Activated naive CD4-positive, alpha-beta T cell treated with anti-CD3 and anti-CD28 coated beads for 36 hours (primary cell): ENCODE measurements at regions of chr9 and their contacts with region 1.

Region 1: GRCh38 chr9:79129865-79130480 is 441.8 kb upstream of the TLE4 start:
- DNase-seq: peak; percentile 58
- H3K4me3 Mint-ChIP-seq: no peak overlapping the region
- H3K27ac Mint-ChIP-seq: no peak overlapping the region
- H3K4me1 Mint-ChIP-seq: no peaks in the 10 kb centered on the region
- H3K27me3 Mint-ChIP-seq: peaks cover 2% of the 10 kb centered on the region

Region 2: GRCh38 chr9:79565245-79565644 is 435.3 kb after region 1 on chr9:
- CTCF ChIA-PET with region 1: interaction called, 3 read pairs
- intact Hi-C with region 1: loop called (anchors 10 kb)
- DNase-seq: peak; percentile 61
- H3K4me3 Mint-ChIP-seq: no peak overlapping the region
- H3K27ac Mint-ChIP-seq: no peak overlapping the region
- H3K4me1 Mint-ChIP-seq: peaks cover 14% of the 10 kb centered on the region
- H3K27me3 Mint-ChIP-seq: peaks cover 11% of the 10 kb centered on the region

Region 3: DNA sequence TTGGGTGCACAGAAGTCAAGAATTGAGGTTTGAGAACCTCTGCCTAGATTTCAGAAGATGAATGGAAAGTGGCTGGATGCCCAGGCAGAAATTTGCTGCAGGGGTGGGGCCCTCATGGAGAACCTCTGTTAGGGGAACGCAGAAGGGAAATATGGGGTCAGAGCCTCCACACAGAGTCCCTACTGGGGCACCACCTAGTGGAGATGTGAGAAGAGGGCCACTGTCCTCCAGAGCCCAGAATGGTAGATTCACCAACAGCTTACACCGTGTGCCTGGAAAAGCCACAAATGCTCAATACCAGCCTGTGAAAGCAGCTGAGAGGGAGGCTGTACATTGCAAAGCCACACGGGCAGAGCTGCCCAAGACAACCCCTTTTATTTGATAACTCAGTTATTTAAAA is 825.3 kb after region 1 on chr9:
- CTCF ChIA-PET with region 1: no interaction called
- intact Hi-C with region 1: loop called (anchors 5 kb)
- DNase-seq: peak; percentile 24
- H3K4me3 Mint-ChIP-seq: no peak overlapping the region
- H3K27ac Mint-ChIP-seq: no peak overlapping the region
- H3K4me1 Mint-ChIP-seq: no peaks in the 10 kb centered on the region
- H3K27me3 Mint-ChIP-seq: no peaks in the 10 kb centered on the region